Dorsolateral prefrontal cortex (tissue), 120 donors: ENCODE measurements at regions of chr21 and their contacts with region 1.

Region 1: GRCh38 chr21:44299458-44300261 is at the start of gene PFKL:
- DNase-seq: peak in 6 of 10 donors; percentile 49 to 77 (median 64)
- H3K4me3 ChIP-seq: peak within 1 kb of the TSS; percentile 57 to 88 (median 78)
- H3K27ac ChIP-seq: peak within 1 kb of the TSS in 58 of 59 donors; percentile 58 to 98 (median 92)
- H3K27me3 ChIP-seq: no peaks in the 10 kb centered on the region
- CTCF ChIP-seq: peak in 7 of 56 donors; percentile 6 to 21 (median 17)
- total RNA-seq, gene PFKL: 102 to 205 (median 156) TPM

Region 2: GRCh38 chr21:44051462-44051941 is 248.2 kb before region 1 on chr21:
- intact Hi-C with region 1: loop called in 1 of 2 experiments (anchors 10 kb)
- DNase-seq: peak in 5 of 10 donors; percentile 41 to 67 (median 56)
- H3K4me3 ChIP-seq: peak overlapping the region in 7 of 59 donors; percentile 2 to 20 (median 7)
- H3K27ac ChIP-seq: peak overlapping the region; percentile 77 to 99 (median 95)
- H3K27me3 ChIP-seq: no peaks in the 10 kb centered on the region
- CTCF ChIP-seq: peak in 1 of 56 donors; percentile 10

Region 3: GRCh38 chr21:44338971-44339910 is 39.6 kb after region 1 on chr21 and contains the start of gene CFAP410:
- intact Hi-C with region 1: loop called (anchors 5 kb)
- DNase-seq: peak; percentile 85 to 99 (median 92)
- H3K4me3 ChIP-seq: peak within 1 kb of the TSS; percentile 62 to 99 (median 86)
- H3K27ac ChIP-seq: peak within 1 kb of the TSS; percentile 77 to 99 (median 95)
- H3K27me3 ChIP-seq: no peaks in the 10 kb centered on the region
- CTCF ChIP-seq: peak in 16 of 56 donors; percentile 8 to 35 (median 22)
- total RNA-seq, gene CFAP410: 23.3 to 59.4 (median 39.0) TPM